ENCODE measurements at regions of chr11 and their contacts with region 1.

Region 1: DNA sequence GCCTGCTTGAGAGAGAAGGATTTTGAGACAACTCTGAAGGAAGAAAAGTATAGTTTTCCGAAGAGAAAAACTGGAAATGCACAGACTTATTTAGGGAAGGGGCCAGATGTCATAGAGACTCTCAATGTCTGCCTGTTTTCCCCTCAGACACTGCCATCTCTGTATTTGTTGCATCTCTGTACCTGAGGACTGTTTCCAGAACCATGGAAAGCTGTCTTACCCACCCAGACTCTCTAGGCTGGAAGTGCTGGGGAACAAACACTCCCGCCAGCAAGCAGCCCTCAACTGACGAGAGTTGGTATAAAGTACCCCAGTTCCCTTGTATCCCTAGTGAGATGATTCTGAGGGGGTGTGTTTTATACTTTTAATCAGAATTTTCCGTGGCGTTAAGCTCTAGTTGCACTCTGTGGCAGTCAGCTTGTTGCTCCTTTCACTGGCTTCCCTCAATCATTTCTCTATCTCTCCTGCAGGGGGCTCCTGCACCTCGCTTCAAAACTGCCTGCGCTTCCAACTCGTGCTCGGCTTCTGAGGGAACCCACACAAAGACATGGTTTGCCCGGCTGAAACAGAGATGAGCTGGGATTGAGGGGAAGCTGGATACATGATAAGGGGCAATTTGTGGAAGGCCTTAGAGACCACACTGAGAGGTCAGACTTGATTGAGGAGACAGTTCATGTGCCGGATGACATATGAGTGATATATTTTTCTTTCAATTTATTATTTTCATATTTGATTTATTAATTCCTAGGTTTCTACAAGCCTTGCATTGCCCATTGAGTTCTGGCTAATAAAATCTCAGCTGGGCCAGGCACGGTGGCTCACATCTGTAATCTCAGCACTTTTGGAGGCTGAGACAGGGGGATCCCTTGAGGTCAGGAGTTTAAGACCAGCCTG is 36.9 kb upstream of the CLPB start:
- DNase-seq: peak in 2 of 3 donors; percentile 40 to 66
- ATAC-seq: peak; percentile 85
- H3K4me3 ChIP-seq: no peak overlapping the region
- H3K4me1 ChIP-seq: no peaks in the 10 kb centered on the region
- CTCF ChIP-seq: peak; percentile 69

Region 2: GRCh38 chr11:72573072-72573854 is 102.0 kb after region 1 on chr11:
- intact Hi-C with region 1: loop called (anchors 10 kb)
- DNase-seq: peak in 1 of 3 donors; percentile 32
- ATAC-seq: peak; percentile 69
- H3K4me3 ChIP-seq: no peak overlapping the region
- H3K4me1 ChIP-seq: no peaks in the 10 kb centered on the region
- CTCF ChIP-seq: peak; percentile 23

Region 3: DNA sequence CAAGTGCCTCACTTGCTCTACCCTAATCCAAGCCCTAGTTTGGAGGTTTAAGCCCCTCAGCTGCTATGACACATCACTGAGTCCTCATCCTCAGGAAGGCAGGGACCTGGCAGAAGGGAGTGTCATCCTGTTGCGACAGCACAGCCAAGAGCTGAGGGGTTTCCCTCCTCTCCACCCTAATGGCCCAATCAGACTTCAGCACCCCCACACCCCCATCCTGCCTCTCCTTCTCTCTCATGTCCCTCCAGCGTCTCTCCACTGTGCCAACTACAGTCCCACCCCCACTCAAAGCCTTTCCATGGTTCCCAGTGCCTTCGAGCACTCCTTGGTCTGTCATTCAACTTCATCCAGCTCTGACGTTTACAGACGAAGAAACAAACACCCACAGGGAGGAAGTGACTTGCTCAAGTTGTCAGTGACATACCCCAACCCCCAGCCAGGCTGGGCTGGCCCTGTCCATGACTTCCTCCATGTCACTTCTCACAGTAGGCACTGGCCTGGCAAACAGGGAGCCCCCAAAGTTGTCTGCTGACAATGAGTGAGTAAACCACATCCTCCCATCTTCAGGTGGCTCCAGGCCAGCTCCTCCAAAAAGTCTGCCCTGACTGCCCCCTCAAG is 265.3 kb after region 1 on chr11:
- intact Hi-C with region 1: no loop called
- DNase-seq: peak in 1 of 3 donors; percentile 84
- ATAC-seq: peak; percentile 56
- H3K4me3 ChIP-seq: no peak overlapping the region
- H3K4me1 ChIP-seq: peaks cover 5% of the 10 kb centered on the region
- CTCF ChIP-seq: no peak